ENCODE measurements at regions of chr10 and their contacts with region 1.

Region 1: DNA sequence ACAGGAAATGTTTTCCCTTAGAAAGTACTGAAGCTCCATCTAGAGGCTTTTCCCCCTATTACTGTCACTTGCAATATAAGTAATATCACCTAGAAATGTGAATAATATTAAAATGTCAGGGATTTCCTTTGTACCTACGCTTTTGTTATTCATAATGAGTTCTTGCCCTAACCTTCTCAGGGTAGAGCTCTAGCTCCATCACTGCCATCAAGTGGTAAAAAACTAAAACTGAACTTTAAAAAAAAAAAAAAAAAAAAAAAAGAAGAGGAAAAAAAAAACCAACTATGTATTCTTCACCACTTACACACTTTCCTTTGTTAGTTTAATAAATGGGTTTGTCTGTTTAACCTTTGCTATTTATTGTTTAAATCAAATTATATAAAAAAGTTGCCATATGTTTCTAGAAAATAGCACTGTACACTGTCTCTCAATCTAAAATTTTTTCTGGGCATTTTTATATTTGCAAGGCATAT is 49.9 kb downstream of the DNAJC1 start:
- DNase-seq: peak in 1 of 35 experiments; percentile 53
- ATAC-seq: peak; percentile 42 to 67 (median 52)
- H3K4me3 ChIP-seq: no peak overlapping the region
- H3K4me3 Mint-ChIP-seq: no peak overlapping the region
- H3K27ac ChIP-seq: no peak overlapping the region
- H3K27ac Mint-ChIP-seq: no peak overlapping the region
- H3K4me1 ChIP-seq: peaks cover 0 to 2% of the 10 kb centered on the region in 2 experiments
- H3K4me1 Mint-ChIP-seq: peaks cover 0 to 3% (median 1%) of the 10 kb centered on the region in 3 donors
- H3K27me3 ChIP-seq: no peaks in the 10 kb centered on the region
- H3K27me3 Mint-ChIP-seq: no peaks in the 10 kb centered on the region

Region 2: DNA sequence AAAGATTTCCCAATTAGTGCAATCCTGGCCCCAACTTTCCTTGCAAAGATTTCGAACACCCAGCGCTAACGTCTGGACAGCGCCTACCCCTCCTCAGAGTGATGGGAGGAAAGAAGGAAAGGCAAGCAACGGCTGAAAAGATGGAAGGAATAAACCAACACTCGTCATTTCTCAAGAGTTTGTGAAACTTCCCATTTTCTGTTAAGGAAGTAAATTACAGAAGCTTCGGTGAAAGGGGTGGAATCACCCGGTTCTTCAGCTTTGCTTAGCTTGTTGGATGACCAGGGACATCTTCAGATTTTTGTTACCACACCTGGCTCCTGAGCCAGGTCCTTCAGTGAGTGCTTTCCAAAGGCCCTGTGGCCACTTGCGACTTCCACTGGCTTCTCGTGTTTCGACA is 741.3 kb before region 1 on chr10:
- CTCF ChIA-PET with region 1: interaction called in 1 of 2 experiments, 10 read pairs
- POLR2A ChIA-PET with region 1: no interaction called
- DNase-seq: no peak
- ATAC-seq: no peak
- H3K4me3 ChIP-seq: no peak overlapping the region
- H3K4me3 Mint-ChIP-seq: no peak overlapping the region
- H3K27ac ChIP-seq: no peak overlapping the region
- H3K27ac Mint-ChIP-seq: no peak overlapping the region
- H3K4me1 ChIP-seq: no peaks in the 10 kb centered on the region
- H3K4me1 Mint-ChIP-seq: no peaks in the 10 kb centered on the region
- H3K27me3 ChIP-seq: peaks cover 0 to 5% of the 10 kb centered on the region in 2 experiments
- H3K27me3 Mint-ChIP-seq: peaks cover 2 to 24% of the 10 kb centered on the region in 2 donors

Region 3: GRCh38 chr10:21978191-21978862 is 24.7 kb after region 1 on chr10:
- CTCF ChIA-PET with region 1: no interaction called
- POLR2A ChIA-PET with region 1: no interaction called
- DNase-seq: no peak
- ATAC-seq: no peak
- H3K4me3 ChIP-seq: no peak overlapping the region
- H3K4me3 Mint-ChIP-seq: no peak overlapping the region
- H3K27ac ChIP-seq: no peak overlapping the region
- H3K27ac Mint-ChIP-seq: no peak overlapping the region
- H3K4me1 ChIP-seq: no peaks in the 10 kb centered on the region
- H3K4me1 Mint-ChIP-seq: peaks cover 27 to 37% (median 27%) of the 10 kb centered on the region in 3 donors
- H3K27me3 ChIP-seq: no peaks in the 10 kb centered on the region
- H3K27me3 Mint-ChIP-seq: no peaks in the 10 kb centered on the region

Region 4: GRCh38 chr10:23094786-23095403 is 1141.3 kb after region 1 on chr10:
- CTCF ChIA-PET with region 1: interaction called in 1 of 2 experiments, 11 read pairs
- POLR2A ChIA-PET with region 1: no interaction called
- DNase-seq: peak in 1 of 35 experiments; percentile 3
- ATAC-seq: peak in 2 of 4 experiments; percentile 1 to 19
- H3K4me3 ChIP-seq: peak overlapping the region in 1 of 2 donors; percentile 74
- H3K4me3 Mint-ChIP-seq: peak overlapping the region; percentile 77 to 92 (median 79)
- H3K27ac ChIP-seq: peak overlapping the region; percentile 54
- H3K27ac Mint-ChIP-seq: peak overlapping the region; percentile 69 to 71
- H3K4me1 ChIP-seq: peaks cover 12 to 16% of the 10 kb centered on the region in 2 experiments
- H3K4me1 Mint-ChIP-seq: peaks cover 28 to 40% (median 30%) of the 10 kb centered on the region in 3 donors
- H3K27me3 ChIP-seq: no peaks in the 10 kb centered on the region
- H3K27me3 Mint-ChIP-seq: no peaks in the 10 kb centered on the region